Heart right ventricle (tissue), 16 donors: ENCODE measurements at regions of chr18 and their contacts with region 1.

Region 1: GRCh38 chr18:9217743-9218451 is 81.3 kb downstream of the ANKRD12 start:
- DNase-seq: peak in 1 of 2 donors; percentile 6
- ATAC-seq: peak in 7 of 8 donors; percentile 63 to 76 (median 70)
- H3K4me3 ChIP-seq: no peak overlapping the region
- H3K27ac ChIP-seq: peak overlapping the region in 1 of 10 donors; percentile 6
- H3K4me1 ChIP-seq: peaks cover 0 to 17% (median 0%) of the 10 kb centered on the region in 9 donors
- H3K27me3 ChIP-seq: no peaks in the 10 kb centered on the region
- CTCF ChIP-seq: no peak

Region 2: GRCh38 chr18:9204659-9205058 is 13.2 kb before region 1 on chr18:
- intact Hi-C with region 1: no loop called
- DNase-seq: no peak
- ATAC-seq: no peak
- H3K4me3 ChIP-seq: no peak overlapping the region
- H3K27ac ChIP-seq: no peak overlapping the region
- H3K4me1 ChIP-seq: peaks cover 0 to 15% (median 0%) of the 10 kb centered on the region in 9 donors
- H3K27me3 ChIP-seq: no peaks in the 10 kb centered on the region
- CTCF ChIP-seq: no peak

Region 3: DNA sequence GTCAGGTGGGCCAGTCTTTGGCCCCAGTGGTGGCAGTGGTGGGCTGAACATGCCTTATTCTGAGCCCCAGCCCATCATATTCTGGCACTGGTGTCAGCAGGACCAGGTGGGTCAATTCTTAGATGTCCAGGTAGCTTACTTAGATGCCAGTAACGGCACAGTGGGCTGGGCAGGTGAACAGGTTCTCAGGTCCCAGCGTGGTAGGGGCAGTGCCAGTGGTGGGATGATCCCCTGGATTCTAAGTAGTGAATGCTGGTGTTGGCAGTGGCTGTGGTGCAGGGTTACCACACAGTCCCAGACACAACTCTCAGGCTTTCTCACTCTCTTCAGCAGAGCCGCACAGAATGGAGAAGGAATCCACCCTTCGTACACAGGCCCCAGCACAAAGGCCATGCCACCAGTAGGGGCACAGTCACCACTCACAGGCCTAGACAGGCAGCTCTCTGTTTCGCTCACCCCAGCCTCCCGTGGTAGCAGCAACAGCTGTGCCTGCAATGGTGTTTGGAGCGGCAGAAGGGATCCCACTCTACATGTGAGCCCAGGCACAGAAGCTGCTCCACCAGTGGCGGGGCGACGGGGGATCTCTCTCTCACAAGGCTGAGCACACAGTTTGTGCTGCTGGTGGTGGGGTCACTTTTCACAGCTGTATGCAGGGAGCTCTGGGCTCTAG is 16.0 kb after region 1 on chr18:
- intact Hi-C with region 1: loop called in 1 of 10 experiments (anchors 1 kb)
- DNase-seq: no peak
- ATAC-seq: peak in 1 of 8 donors; percentile 53
- H3K4me3 ChIP-seq: no peak overlapping the region
- H3K27ac ChIP-seq: no peak overlapping the region
- H3K4me1 ChIP-seq: peaks cover 0 to 9% (median 0%) of the 10 kb centered on the region in 9 donors
- H3K27me3 ChIP-seq: no peaks in the 10 kb centered on the region
- CTCF ChIP-seq: no peak